Activated CD4-positive, alpha-beta T cell treated with anti-CD3 and anti-CD28 coated beads for 36 hours (primary cell): ENCODE measurements at regions of chr5 and their contacts with region 1.

Region 1: DNA sequence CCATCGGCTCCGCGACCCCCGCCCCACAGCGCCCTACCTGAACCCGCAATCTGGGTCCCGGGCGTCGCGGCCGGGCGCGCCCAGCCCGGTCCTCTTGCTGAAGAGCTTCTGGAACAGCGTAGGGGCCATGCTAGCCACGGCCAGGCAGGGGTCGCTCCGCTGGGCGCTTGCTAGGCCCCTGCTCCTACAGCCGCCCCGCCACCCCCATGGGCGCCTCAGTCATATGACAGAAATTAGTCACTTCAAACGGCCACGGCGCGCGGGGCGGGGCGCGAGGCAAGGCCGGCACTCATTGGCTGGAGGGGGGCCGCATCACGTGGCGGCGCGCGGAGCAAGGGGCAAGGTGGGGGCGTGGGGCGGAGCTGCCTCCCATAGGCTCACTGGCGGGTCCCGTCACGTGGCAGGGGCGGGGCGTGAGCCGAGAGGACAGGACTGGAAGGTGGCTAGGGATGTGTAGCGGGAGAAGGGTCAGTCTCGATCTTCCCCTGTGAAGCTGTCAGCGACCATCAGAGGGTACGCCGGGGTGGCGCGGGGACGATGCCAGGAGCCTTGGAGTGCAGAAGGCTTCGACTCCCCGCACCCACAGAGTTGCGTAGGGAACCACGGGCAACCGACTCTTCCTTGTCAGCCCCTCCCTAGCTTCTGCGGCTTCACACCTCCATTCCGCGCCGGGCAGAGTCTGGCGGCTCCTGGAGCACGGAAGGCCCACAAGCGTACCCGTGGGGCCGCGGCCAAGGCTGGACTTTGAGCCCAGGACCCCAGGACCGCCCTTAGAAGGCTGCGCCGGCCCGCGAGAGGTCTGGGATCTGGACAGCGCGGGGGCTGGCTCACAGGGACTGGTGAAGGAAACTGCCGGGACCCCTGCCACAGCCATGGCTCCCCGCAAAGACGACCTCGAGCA is at the start of gene FNIP1:
- DNase-seq: peak; percentile 99
- ATAC-seq: peak; percentile 98
- H3K4me3 Mint-ChIP-seq: peak within 1 kb of the TSS; percentile 99
- H3K27ac Mint-ChIP-seq: peak within 1 kb of the TSS; percentile 91
- H3K4me1 Mint-ChIP-seq: peaks cover 28% of the 10 kb centered on the region
- H3K27me3 Mint-ChIP-seq: no peaks in the 10 kb centered on the region
- total RNA-seq, gene FNIP1: 14.2 to 16.3 TPM

Region 2: DNA sequence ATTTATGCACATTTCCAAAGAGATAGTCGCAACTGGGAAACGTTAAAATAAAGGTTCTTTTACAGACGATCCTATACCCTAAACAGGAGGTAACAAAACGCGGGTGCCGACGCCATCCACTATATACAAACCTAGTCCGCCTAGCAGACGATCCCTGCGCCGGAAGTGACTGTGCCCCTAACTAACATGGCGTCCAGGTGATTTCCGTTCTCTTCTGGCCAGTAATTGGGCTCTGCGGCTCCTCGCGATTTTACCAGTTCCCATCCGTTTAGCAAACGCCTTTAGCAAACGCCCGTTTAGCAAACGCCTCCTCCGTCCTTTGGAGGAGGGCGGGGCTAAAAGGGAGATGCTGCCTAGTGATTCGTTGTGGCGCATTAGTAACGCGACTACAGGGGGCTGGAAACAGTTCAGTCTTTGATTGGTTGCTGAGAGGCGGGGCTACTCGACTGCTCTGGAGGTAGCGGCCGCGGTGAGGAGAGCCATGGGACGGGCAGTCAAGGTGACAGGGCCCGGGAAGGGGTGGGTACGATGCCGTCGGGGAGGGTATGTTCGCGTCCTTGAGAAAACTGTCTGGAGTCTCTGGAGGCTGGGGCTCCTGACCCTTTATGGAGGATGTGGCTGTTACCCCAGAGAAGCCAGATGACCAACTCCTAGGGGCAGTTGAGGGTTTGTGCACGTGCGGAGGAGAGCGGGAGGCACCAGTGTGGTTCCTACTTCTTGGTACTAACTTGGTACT is 626.3 kb before region 1 on chr5 and contains the start of gene LYRM7:
- CTCF ChIA-PET with region 1: no interaction called
- POLR2A ChIA-PET with region 1: no interaction called
- intact Hi-C with region 1: loop called in 1 of 2 experiments (anchors 5 kb)
- DNase-seq: peak; percentile 97
- ATAC-seq: peak; percentile 96
- H3K4me3 Mint-ChIP-seq: peak within 1 kb of the TSS; percentile 95
- H3K27ac Mint-ChIP-seq: peak within 1 kb of the TSS; percentile 93
- H3K4me1 Mint-ChIP-seq: peaks cover 34% of the 10 kb centered on the region
- H3K27me3 Mint-ChIP-seq: no peaks in the 10 kb centered on the region
- total RNA-seq, gene LYRM7: 16.0 to 20.7 TPM

Region 3: GRCh38 chr5:131548176-131548575 is 248.9 kb before region 1 on chr5:
- CTCF ChIA-PET with region 1: no interaction called
- POLR2A ChIA-PET with region 1: no interaction called
- intact Hi-C with region 1: loop called in 1 of 2 experiments (anchors 5 kb)
- DNase-seq: no peak
- ATAC-seq: peak; percentile 92
- H3K4me3 Mint-ChIP-seq: peak overlapping the region; percentile 83
- H3K27ac Mint-ChIP-seq: peak overlapping the region; percentile 97
- H3K4me1 Mint-ChIP-seq: peaks cover 76% of the 10 kb centered on the region
- H3K27me3 Mint-ChIP-seq: no peaks in the 10 kb centered on the region

Region 4: GRCh38 chr5:131595088-131596033 is 201.7 kb before region 1 on chr5:
- CTCF ChIA-PET with region 1: interaction called, 7 read pairs
- POLR2A ChIA-PET with region 1: interaction called, 3 read pairs
- intact Hi-C with region 1: loop called in 1 of 2 experiments (anchors 2 kb)
- DNase-seq: peak; percentile 38
- ATAC-seq: peak; percentile 86
- H3K4me3 Mint-ChIP-seq: peak overlapping the region; percentile 4
- H3K27ac Mint-ChIP-seq: peak overlapping the region; percentile 83
- H3K4me1 Mint-ChIP-seq: peaks cover 57% of the 10 kb centered on the region
- H3K27me3 Mint-ChIP-seq: no peaks in the 10 kb centered on the region

Region 5: GRCh38 chr5:131747180-131748105 is 49.6 kb before region 1 on chr5:
- CTCF ChIA-PET with region 1: no interaction called
- POLR2A ChIA-PET with region 1: no interaction called
- intact Hi-C with region 1: loop called (anchors 1 kb)
- DNase-seq: no peak
- ATAC-seq: peak; percentile 92
- H3K4me3 Mint-ChIP-seq: peak overlapping the region; percentile 54
- H3K27ac Mint-ChIP-seq: peak overlapping the region; percentile 93
- H3K4me1 Mint-ChIP-seq: peaks cover 46% of the 10 kb centered on the region
- H3K27me3 Mint-ChIP-seq: no peaks in the 10 kb centered on the region

Region 6: DNA sequence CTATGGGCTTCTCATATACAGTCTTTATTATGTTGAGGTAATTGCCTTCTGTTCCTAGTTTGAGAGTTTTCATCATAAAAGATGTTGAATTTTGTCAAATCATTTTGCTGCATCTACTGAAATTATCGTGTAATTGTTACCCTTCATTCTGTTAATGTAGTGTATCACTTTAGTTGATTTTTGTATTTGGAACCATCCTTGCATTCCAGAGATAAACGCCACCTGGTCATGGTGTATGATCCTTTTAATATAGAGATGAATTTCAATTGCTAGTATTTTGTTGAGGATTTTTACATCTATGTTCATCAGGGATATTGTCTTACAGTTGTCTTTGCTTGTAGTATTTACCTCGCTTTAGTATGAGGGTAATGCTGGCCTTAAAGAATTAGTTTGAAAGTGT is 129.1 kb after region 1 on chr5:
- CTCF ChIA-PET with region 1: no interaction called
- POLR2A ChIA-PET with region 1: no interaction called
- intact Hi-C with region 1: no loop called
- DNase-seq: no peak
- ATAC-seq: no peak
- H3K4me3 Mint-ChIP-seq: no peak overlapping the region
- H3K27ac Mint-ChIP-seq: no peak overlapping the region
- H3K4me1 Mint-ChIP-seq: no peaks in the 10 kb centered on the region
- H3K27me3 Mint-ChIP-seq: peaks cover 2% of the 10 kb centered on the region

Region 7: DNA sequence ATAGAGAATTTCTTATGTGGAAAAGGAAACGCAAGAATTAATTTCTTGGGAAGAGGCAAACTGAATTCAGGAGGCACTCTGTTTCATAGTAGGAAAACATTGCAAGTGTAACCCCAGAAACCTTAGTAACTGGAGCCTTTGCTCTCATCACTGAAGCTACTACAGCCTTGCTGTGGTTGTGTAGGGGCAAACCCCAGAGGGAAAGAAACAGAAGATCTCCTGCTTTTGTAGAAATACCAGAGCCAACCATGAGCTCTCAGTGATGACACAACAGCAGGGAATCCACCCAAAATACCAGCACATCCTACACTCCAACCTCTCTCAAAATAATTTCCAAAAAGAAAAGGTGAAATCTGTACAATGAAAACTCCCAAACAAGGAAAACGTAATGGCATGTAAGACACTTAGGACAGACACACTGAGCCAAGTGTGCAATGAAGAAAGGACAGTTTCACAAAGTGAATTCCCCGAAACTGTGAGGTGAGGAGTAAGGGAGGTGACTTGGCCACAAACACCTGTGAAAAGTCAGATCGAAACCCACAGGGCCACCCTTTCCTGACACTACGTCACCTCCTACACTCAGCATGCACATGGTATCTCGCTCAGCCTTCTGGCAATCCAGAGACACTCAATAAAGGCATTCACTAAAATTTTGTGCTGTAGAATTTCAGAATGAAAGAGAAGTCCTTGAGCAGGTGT is 223.0 kb after region 1 on chr5:
- CTCF ChIA-PET with region 1: no interaction called
- POLR2A ChIA-PET with region 1: no interaction called
- intact Hi-C with region 1: loop called in 1 of 2 experiments (anchors 1 kb)
- DNase-seq: peak; percentile 89
- ATAC-seq: peak; percentile 90
- H3K4me3 Mint-ChIP-seq: peak overlapping the region; percentile 35
- H3K27ac Mint-ChIP-seq: peak overlapping the region; percentile 91
- H3K4me1 Mint-ChIP-seq: peaks cover 41% of the 10 kb centered on the region
- H3K27me3 Mint-ChIP-seq: peaks cover 36% of the 10 kb centered on the region